Right ventricle myocardium inferior (tissue), 1 donor: ENCODE measurements at regions of chr19 and their contacts with region 1.

Region 1: GRCh38 chr19:8580710-8581281 is 3.6 kb upstream of the MYO1F start:
- DNase-seq: peak; percentile 90
- ATAC-seq: peak; percentile 75

Region 2: GRCh38 chr19:8355631-8356402 is 225.0 kb before region 1 on chr19:
- intact Hi-C with region 1: loop called (anchors 5 kb)
- DNase-seq: no peak
- ATAC-seq: no peak

Region 3: GRCh38 chr19:8615813-8616596 is 35.2 kb after region 1 on chr19:
- intact Hi-C with region 1: loop called (anchors 2 kb)
- DNase-seq: peak; percentile 81
- ATAC-seq: no peak

Region 4: GRCh38 chr19:8641908-8642547 is 61.2 kb after region 1 on chr19:
- intact Hi-C with region 1: loop called (anchors 2 kb)
- DNase-seq: no peak
- ATAC-seq: no peak

Region 5: DNA sequence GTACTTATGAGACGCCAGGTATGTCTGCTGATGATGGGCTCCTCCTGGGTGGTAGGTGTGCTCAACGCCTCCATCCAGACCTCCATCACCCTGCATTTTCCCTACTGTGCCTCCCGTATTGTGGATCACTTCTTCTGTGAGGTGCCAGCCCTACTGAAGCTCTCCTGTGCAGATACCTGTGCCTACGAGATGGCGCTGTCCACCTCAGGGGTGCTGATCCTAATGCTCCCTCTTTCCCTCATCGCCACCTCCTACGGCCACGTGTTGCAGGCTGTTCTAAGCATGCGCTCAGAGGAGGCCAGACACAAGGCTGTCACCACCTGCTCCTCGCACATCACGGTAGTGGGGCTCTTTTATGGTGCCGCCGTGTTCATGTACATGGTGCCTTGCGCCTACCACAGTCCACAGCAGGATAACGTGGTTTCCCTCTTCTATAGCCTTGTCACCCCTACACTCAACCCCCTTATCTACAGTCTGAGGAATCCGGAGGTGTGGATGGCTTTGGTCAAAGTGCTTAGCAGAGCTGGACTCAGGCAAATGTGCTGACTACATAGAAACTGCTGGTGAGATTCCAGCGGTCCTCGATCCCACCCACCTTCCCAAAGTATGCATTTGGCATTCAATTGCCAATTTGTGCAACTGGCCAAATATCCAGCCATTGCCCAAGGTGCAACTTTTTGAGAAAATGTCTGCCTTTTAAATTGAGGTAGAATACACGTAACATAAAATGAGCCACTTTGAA is 150.8 kb after region 1 on chr19:
- intact Hi-C with region 1: no loop called
- DNase-seq: no peak
- ATAC-seq: no peak